Activated CD8-positive, alpha-beta T cell treated with anti-CD3 and anti-CD28 coated beads, Interleukin-2, amount 10 ng/mL, durations not matched to agents 7 days and 5 days (primary cell): ENCODE measurements at regions of chr9 and their contacts with region 1.

Region 1: GRCh38 chr9:93108291-93109041 is 12.4 kb downstream of the CARD19 start:
- DNase-seq: no peak
- ATAC-seq: peak; percentile 48
- H3K4me3 Mint-ChIP-seq: no peak overlapping the region
- H3K27ac Mint-ChIP-seq: no peak overlapping the region
- H3K4me1 Mint-ChIP-seq: peaks cover 51% of the 10 kb centered on the region
- H3K27me3 Mint-ChIP-seq: no peaks in the 10 kb centered on the region

Region 2: GRCh38 chr9:92954049-92954861 is 154.2 kb before region 1 on chr9:
- CTCF ChIA-PET with region 1: interaction called, 16 read pairs
- POLR2A ChIA-PET with region 1: no interaction called
- DNase-seq: peak; percentile 86
- ATAC-seq: peak; percentile 89
- H3K4me3 Mint-ChIP-seq: peak overlapping the region; percentile 73
- H3K27ac Mint-ChIP-seq: peak overlapping the region; percentile 93
- H3K4me1 Mint-ChIP-seq: peaks cover 74% of the 10 kb centered on the region
- H3K27me3 Mint-ChIP-seq: peaks cover 3% of the 10 kb centered on the region

Region 3: DNA sequence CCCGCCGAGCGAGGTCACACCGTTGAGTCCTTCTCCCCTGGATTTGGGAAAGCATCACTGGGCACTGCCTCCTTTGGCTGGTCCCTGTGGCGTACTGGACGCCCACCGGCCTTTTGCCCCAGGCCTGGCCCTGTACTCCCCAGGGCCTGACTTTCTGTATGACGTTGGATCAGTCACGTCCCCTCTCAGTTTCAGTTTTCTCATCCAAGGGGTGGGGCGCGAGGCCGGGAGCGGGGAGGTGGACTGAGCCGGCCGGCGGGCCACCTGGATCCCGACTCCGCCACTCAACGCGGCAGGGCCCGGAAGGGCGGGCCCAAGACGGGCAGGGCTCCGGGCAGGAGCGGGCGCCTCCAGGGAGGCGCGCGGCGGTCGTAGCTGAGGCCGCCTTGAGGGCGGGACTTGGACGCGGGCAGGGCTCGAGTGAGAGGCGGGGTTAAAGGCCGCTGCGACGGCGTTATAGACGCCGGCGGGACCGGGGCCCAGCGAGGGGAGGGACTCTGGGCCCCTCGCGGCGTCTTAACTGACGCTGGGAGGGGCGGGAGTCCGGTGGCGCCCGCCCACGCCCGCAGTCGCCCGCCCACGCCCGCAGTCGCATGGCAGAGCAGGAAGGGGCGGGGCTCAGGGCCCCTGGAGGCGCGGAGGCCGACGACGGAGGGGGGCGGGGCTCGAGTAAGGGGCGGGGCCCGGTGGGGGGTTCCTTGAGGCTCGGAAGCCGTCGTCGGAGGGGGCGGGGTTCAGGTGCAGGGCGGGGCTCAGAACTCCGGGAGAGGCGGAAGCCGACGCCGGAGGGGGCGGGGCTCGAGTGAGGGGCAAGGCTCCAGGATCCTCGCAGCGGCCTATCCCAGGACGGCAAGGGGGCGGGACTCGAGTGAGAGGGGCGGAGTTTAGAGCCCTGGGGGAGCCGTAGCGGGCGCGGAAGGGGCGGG is 13.0 kb before region 1 on chr9:
- CTCF ChIA-PET with region 1: interaction called, 49 read pairs
- POLR2A ChIA-PET with region 1: interaction called, 9 read pairs
- DNase-seq: peak; percentile 100
- ATAC-seq: peak; percentile 84
- H3K4me3 Mint-ChIP-seq: peak overlapping the region; percentile 74
- H3K27ac Mint-ChIP-seq: peak overlapping the region; percentile 98
- H3K4me1 Mint-ChIP-seq: peaks cover 79% of the 10 kb centered on the region
- H3K27me3 Mint-ChIP-seq: no peaks in the 10 kb centered on the region

Region 4: GRCh38 chr9:93126825-93127368 is 18.4 kb after region 1 on chr9:
- CTCF ChIA-PET with region 1: interaction called, 21 read pairs
- POLR2A ChIA-PET with region 1: interaction called, 3 read pairs
- DNase-seq: no peak
- ATAC-seq: peak; percentile 11
- H3K4me3 Mint-ChIP-seq: no peak overlapping the region
- H3K27ac Mint-ChIP-seq: peak overlapping the region; percentile 94
- H3K4me1 Mint-ChIP-seq: peaks cover 55% of the 10 kb centered on the region
- H3K27me3 Mint-ChIP-seq: no peaks in the 10 kb centered on the region

Region 5: DNA sequence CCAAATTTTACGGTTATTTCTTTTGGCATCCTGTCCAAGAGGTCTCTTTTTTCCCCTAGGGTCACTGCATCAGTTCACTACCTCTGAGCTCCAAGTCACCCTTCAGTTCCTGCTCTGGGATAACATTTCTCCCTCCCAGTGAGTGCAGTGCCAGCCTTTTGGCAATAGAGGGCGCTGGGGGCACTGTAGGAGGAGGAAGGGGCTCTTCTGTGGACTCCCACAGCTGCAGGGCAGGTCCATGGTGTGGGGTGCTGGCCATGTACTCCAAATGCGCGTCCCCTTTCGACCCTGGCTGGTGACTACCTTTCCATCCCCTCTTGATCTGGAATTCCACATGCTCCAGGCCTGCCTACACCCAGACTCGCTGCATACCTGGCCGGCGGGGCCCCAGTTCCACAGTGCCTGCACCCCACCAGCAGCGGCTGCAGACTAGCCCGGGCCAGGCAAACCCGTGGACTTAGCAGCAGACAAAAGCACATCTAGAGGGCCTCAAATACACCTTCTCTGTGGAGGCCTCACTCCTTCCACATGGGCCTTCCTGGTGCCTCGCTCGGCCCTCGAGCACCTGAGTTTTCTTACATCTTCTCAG is 45.9 kb after region 1 on chr9:
- CTCF ChIA-PET with region 1: interaction called, 11 read pairs
- POLR2A ChIA-PET with region 1: interaction called, 3 read pairs
- DNase-seq: peak; percentile 52
- ATAC-seq: no peak
- H3K4me3 Mint-ChIP-seq: no peak overlapping the region
- H3K27ac Mint-ChIP-seq: no peak overlapping the region
- H3K4me1 Mint-ChIP-seq: peaks cover 13% of the 10 kb centered on the region
- H3K27me3 Mint-ChIP-seq: no peaks in the 10 kb centered on the region